SK-N-SH (cell line): ENCODE measurements at regions of chr7 and their contacts with region 1.

Region 1: DNA sequence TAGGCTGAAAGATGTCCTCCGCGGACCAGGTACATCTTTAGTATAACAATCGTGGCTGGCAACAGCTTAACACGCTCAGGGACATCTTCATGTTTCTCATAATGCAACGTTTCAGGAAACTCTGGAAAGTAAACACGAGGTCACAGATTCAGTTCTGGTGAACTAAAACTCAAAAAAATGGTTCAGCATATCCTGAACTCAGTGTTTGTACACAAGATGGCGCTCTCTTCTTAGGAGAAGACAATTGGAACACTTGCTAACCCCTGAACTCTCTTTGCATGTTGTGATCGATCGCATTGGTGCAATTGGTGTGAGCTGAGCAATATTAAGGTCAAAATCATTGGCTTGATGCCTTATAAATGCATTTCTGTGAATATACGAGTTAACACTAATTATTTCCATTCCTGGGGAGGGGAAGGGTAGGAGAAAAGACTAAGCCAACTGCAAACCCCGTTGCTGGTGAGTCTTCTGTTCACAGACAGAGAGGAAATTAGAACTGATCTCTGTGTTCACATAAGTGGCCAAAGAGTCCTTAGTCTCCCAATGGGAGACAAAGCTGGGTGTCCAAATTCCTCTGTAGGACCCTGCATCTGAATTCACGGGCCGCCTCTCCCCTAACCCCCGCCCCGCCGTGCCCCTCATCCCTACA is 52.6 kb upstream of the FAM180A start:
- DNase-seq: peak; percentile 73
- H3K4me3 ChIP-seq: no peak overlapping the region; a peak in 1 of 4 replicates
- H3K27ac ChIP-seq: no peak overlapping the region
- H3K4me1 ChIP-seq: peaks cover 0 to 9% of the 10 kb centered on the region in 2 experiments; a peak in 1 of 4 replicates
- H3K27me3 ChIP-seq: no peaks in the 10 kb centered on the region
- CTCF ChIP-seq: peak; percentile 98
- EP300 ChIP-seq: no peak
- RAD21 ChIP-seq: peak; percentile 100

Region 2: GRCh38 chr7:135784013-135784412 is 17.2 kb before region 1 on chr7:
- CTCF ChIA-PET with region 1: interaction called, 25 read pairs
- POLR2A ChIA-PET with region 1: no interaction called
- DNase-seq: no peak
- H3K4me3 ChIP-seq: no peak overlapping the region
- H3K27ac ChIP-seq: no peak overlapping the region
- H3K4me1 ChIP-seq: no peaks in the 10 kb centered on the region
- H3K27me3 ChIP-seq: no peaks in the 10 kb centered on the region
- CTCF ChIP-seq: no peak
- EP300 ChIP-seq: no peak
- RAD21 ChIP-seq: no peak

Region 3: GRCh38 chr7:135817583-135817982 is 16.4 kb after region 1 on chr7:
- CTCF ChIA-PET with region 1: interaction called, 11 read pairs
- POLR2A ChIA-PET with region 1: no interaction called
- DNase-seq: no peak
- H3K4me3 ChIP-seq: no peak overlapping the region
- H3K27ac ChIP-seq: no peak overlapping the region
- H3K4me1 ChIP-seq: no peaks in the 10 kb centered on the region; a peak in 1 of 4 replicates
- H3K27me3 ChIP-seq: no peaks in the 10 kb centered on the region; the same call in 1 of the 2 replicates
- CTCF ChIP-seq: no peak
- EP300 ChIP-seq: no peak
- RAD21 ChIP-seq: no peak

Region 4: DNA sequence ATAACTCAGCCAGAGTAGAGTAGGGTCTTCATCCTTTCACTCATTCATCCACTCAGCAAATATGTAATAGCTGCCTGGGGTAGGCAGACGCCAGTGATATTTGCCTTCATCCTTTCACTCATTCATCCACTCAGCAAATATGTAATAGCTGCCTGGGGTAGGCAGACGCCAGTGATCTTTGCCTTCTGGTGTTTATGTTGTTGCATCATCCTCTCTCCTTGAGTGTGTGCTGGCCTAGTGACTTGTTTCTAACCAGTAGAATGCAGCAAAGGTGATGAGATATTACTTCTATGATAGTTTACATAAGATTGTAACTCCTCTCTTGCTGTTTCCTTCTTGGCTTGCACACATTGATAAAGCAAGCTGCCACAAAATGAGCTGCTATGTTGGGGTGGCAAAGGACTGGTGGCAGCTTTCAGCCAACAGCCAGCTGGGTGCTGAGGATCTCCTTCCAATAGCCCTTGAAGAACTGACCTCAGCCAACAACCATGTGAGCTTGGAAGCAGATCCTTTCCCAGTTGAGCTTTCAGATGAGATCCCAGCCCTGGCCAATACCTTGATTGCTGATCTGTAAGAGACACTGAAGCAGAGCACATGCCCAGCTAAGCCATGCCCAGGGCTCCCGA is 199.2 kb after region 1 on chr7:
- CTCF ChIA-PET with region 1: interaction called, 15 read pairs
- POLR2A ChIA-PET with region 1: no interaction called
- DNase-seq: no peak
- H3K4me3 ChIP-seq: no peak overlapping the region
- H3K27ac ChIP-seq: no peak overlapping the region
- H3K4me1 ChIP-seq: no peaks in the 10 kb centered on the region
- H3K27me3 ChIP-seq: no peaks in the 10 kb centered on the region
- CTCF ChIP-seq: no peak
- EP300 ChIP-seq: no peak
- RAD21 ChIP-seq: no peak

Region 5: GRCh38 chr7:136009488-136010079 is 208.4 kb after region 1 on chr7:
- CTCF ChIA-PET with region 1: interaction called, 68 read pairs
- POLR2A ChIA-PET with region 1: no interaction called
- DNase-seq: peak; percentile 55
- H3K4me3 ChIP-seq: no peak overlapping the region; a peak in 1 of 4 replicates
- H3K27ac ChIP-seq: no peak overlapping the region
- H3K4me1 ChIP-seq: no peaks in the 10 kb centered on the region; a peak in 1 of 4 replicates
- H3K27me3 ChIP-seq: no peaks in the 10 kb centered on the region
- CTCF ChIP-seq: peak; percentile 98
- EP300 ChIP-seq: no peak
- RAD21 ChIP-seq: peak; percentile 94

Region 6: GRCh38 chr7:136016649-136017395 is 215.7 kb after region 1 on chr7:
- CTCF ChIA-PET with region 1: interaction called, 15 read pairs
- POLR2A ChIA-PET with region 1: no interaction called
- DNase-seq: no peak
- H3K4me3 ChIP-seq: no peak overlapping the region
- H3K27ac ChIP-seq: no peak overlapping the region
- H3K4me1 ChIP-seq: peaks cover 0 to 6% of the 10 kb centered on the region in 2 experiments; a peak in 2 of 4 replicates
- H3K27me3 ChIP-seq: no peaks in the 10 kb centered on the region
- CTCF ChIP-seq: no peak
- EP300 ChIP-seq: no peak
- RAD21 ChIP-seq: no peak

Region 7: GRCh38 chr7:136868496-136869000 is 1067.4 kb after region 1 on chr7 and contains the start of gene CHRM2:
- CTCF ChIA-PET with region 1: interaction called, 14 read pairs
- POLR2A ChIA-PET with region 1: no interaction called
- DNase-seq: peak; percentile 55
- H3K4me3 ChIP-seq: peak within 1 kb of the TSS; percentile 43 to 47
- H3K27ac ChIP-seq: no peak within 1 kb of the TSS
- H3K4me1 ChIP-seq: peaks cover 3 to 32% of the 10 kb centered on the region in 2 experiments; a peak in 1 of 4 replicates
- H3K27me3 ChIP-seq: peaks cover 43% of the 10 kb centered on the region
- CTCF ChIP-seq: no peak
- EP300 ChIP-seq: no peak
- RAD21 ChIP-seq: no peak
- polyA plus RNA-seq, gene CHRM2: 0.02 and 0.23 TPM in 2 replicates